PC-3 (cell line): ENCODE measurements at regions of chr2 and their contacts with region 1.

Region 1: DNA sequence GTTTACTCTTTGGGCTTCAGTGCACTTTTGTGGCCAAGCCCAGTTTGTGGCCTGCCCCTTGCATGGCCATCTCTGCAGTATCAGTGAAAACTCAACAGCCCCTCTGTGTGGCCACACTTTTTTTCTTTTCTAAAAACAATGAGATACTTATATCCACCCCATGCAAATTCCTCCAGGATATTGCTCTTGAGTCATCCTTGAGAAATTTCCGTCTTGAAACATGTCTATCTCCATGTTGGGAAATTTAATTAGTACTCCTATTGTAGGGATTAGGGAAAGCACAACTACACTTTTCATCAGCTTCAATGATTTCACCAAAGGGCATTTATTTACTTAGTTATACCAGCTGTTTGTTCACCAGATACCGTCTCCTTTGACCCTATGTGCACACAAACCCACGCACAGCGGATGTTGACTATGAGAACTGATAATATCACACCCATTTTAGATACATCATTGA is 993.1 kb downstream of the TSN start:
- DNase-seq: peak; percentile 96
- ATAC-seq: peak; percentile 96
- H3K4me3 ChIP-seq: no peak overlapping the region
- H3K27ac ChIP-seq: peak overlapping the region; percentile 96
- H3K4me1 ChIP-seq: peaks cover 23% of the 10 kb centered on the region
- H3K27me3 ChIP-seq: no peaks in the 10 kb centered on the region
- CTCF ChIP-seq: peak; percentile 65

Region 2: GRCh38 chr2:121810959-121811853 is 937.4 kb before region 1 on chr2:
- CTCF ChIA-PET with region 1: no interaction called
- POLR2A ChIA-PET with region 1: no interaction called
- intact Hi-C with region 1: loop called (anchors 5 kb)
- DNase-seq: peak; percentile 79
- ATAC-seq: peak; percentile 97
- H3K4me3 ChIP-seq: no peak overlapping the region
- H3K27ac ChIP-seq: no peak overlapping the region
- H3K4me1 ChIP-seq: no peaks in the 10 kb centered on the region
- H3K27me3 ChIP-seq: 0 out of 2 replicates have a peak, but pooled peaks cover 4% of the 10 kb centered on the region
- CTCF ChIP-seq: peak; percentile 78

Region 3: DNA sequence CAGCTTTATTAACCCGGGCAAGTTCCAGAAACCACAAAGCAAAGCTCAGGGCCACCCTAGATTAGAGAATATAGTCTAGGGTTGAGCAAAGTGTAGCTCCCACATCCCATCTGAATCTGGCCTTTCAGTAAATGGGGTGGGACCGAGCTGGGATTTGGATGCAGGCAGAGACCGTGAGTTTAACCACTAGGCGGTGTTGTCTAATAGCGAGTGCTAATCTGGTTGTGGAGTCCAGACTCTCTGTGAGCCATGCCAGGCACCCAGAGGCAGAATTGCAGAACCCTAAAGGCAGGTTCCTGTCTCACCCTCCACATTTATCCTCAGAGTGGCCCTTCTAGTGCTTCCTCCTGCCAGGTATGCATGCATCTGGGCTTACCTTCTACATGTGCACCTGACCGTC is 557.2 kb before region 1 on chr2:
- CTCF ChIA-PET with region 1: no interaction called
- POLR2A ChIA-PET with region 1: no interaction called
- intact Hi-C with region 1: loop called (anchors 1 kb)
- DNase-seq: peak; percentile 77
- ATAC-seq: peak; percentile 97
- H3K4me3 ChIP-seq: no peak overlapping the region
- H3K27ac ChIP-seq: no peak overlapping the region
- H3K4me1 ChIP-seq: peaks cover 10% of the 10 kb centered on the region; the same call in 1 of the 2 replicates
- H3K27me3 ChIP-seq: no peaks in the 10 kb centered on the region
- CTCF ChIP-seq: peak; percentile 85

Region 4: DNA sequence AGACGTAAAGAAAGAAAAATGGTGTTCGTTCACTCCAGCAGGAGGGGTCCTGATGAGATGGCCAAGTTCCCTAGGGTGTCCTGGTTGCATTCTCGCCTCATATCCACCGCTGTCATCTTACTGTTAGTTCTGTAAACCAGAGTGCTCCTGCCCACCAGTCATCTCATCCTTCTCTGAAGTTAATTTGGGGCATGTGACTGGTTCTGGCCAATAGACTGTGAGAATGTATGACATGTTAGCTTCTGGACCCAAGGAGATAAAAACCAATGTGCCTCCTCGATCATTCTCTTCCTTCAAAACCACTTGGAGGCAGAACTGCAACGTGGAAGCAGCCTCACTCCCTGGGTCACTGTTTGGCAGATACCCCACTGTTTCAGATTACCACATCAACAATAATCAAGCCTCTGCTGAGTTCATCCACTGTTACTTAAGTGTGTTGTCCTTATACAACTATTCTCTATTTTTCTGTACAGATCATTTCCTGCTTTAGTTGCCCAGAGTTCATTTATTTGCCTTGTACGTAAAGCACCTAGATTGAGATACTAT is 234.1 kb before region 1 on chr2:
- CTCF ChIA-PET with region 1: no interaction called
- POLR2A ChIA-PET with region 1: no interaction called
- intact Hi-C with region 1: loop called (anchors 1 kb)
- DNase-seq: peak; percentile 59
- ATAC-seq: peak; percentile 85
- H3K4me3 ChIP-seq: no peak overlapping the region
- H3K27ac ChIP-seq: no peak overlapping the region
- H3K4me1 ChIP-seq: peaks cover 4% of the 10 kb centered on the region
- H3K27me3 ChIP-seq: no peaks in the 10 kb centered on the region
- CTCF ChIP-seq: peak; percentile 40; the same call in 1 of the 2 replicates

Region 5: GRCh38 chr2:122831649-122832048 is 83.1 kb after region 1 on chr2:
- CTCF ChIA-PET with region 1: no interaction called
- POLR2A ChIA-PET with region 1: no interaction called
- intact Hi-C with region 1: loop called (anchors 1 kb)
- DNase-seq: peak; percentile 93
- ATAC-seq: peak; percentile 90
- H3K4me3 ChIP-seq: no peak overlapping the region
- H3K27ac ChIP-seq: peak overlapping the region; percentile 45
- H3K4me1 ChIP-seq: peaks cover 28% of the 10 kb centered on the region
- H3K27me3 ChIP-seq: no peaks in the 10 kb centered on the region
- CTCF ChIP-seq: no peak

Region 6: DNA sequence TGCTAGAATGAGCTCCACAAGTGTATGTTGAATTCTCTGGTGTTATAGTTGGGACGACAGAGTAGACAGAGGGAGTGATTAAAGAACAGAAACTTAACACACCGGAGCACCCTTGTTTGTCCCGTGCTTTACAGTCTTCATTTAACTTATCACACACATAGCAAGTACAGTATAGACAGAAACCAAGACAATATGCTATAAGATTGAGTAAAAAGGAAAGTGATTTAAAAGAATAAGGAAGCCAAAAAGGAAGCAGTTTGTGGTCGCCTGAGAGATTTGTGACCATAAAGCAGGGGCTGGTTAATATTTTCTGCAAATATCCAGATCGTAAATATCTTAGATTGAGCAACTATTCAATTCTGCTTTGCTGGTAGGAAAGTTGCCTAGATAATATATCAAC is 135.3 kb after region 1 on chr2:
- CTCF ChIA-PET with region 1: no interaction called
- POLR2A ChIA-PET with region 1: no interaction called
- intact Hi-C with region 1: loop called (anchors 1 kb)
- DNase-seq: no peak
- ATAC-seq: no peak
- H3K4me3 ChIP-seq: no peak overlapping the region
- H3K27ac ChIP-seq: peak overlapping the region; percentile 87
- H3K4me1 ChIP-seq: peaks cover 18% of the 10 kb centered on the region
- H3K27me3 ChIP-seq: no peaks in the 10 kb centered on the region
- CTCF ChIP-seq: no peak

Region 7: DNA sequence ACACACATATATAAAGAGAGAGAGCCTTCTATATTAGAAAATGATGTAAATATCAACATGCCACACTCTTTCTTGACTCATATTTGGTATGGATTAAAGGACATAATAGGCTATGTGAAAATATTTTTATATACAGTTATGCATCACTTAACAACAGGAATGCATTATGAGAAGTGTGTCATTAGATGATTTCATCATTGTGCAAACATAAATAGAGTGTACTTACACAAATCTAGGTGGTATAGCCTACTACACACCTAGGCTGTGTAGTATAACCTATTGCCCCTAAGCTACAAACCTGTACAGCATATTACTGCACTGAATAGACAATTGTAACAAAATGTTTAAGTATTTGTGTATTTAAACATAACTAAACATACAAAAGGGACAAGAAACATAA is 921.7 kb after region 1 on chr2:
- CTCF ChIA-PET with region 1: no interaction called
- POLR2A ChIA-PET with region 1: no interaction called
- intact Hi-C with region 1: loop called (anchors 1 kb)
- DNase-seq: peak; percentile 91
- ATAC-seq: peak; percentile 98
- H3K4me3 ChIP-seq: no peak overlapping the region
- H3K27ac ChIP-seq: peak overlapping the region; percentile 50
- H3K4me1 ChIP-seq: peaks cover 19% of the 10 kb centered on the region
- H3K27me3 ChIP-seq: no peaks in the 10 kb centered on the region
- CTCF ChIP-seq: no peak